Mammary epithelial cell (primary cell): ENCODE measurements at regions of chr7 and their contacts with region 1.

Region 1: GRCh38 chr7:131945313-131945911 is 389.0 kb upstream of the PODXL start:
- DNase-seq: peak; percentile 12
- H3K4me3 ChIP-seq: no peak overlapping the region
- H3K27ac ChIP-seq: no peak overlapping the region
- H3K4me1 ChIP-seq: peaks cover 5% of the 10 kb centered on the region
- H3K27me3 ChIP-seq: no peaks in the 10 kb centered on the region
- CTCF ChIP-seq: peak; percentile 50 to 86

Region 2: GRCh38 chr7:131683536-131684125 is 261.8 kb before region 1 on chr7:
- CTCF ChIA-PET with region 1: no interaction called
- dilution Hi-C with region 1: no loop called
- in situ Hi-C with region 1: no loop called
- intact Hi-C with region 1: no loop called
- DNase-seq: no peak
- H3K4me3 ChIP-seq: no peak overlapping the region
- H3K27ac ChIP-seq: no peak overlapping the region
- H3K4me1 ChIP-seq: no peaks in the 10 kb centered on the region
- H3K27me3 ChIP-seq: no peaks in the 10 kb centered on the region
- CTCF ChIP-seq: no peak

Region 3: GRCh38 chr7:132049462-132050304 is 104.3 kb after region 1 on chr7:
- CTCF ChIA-PET with region 1: no interaction called
- dilution Hi-C with region 1: no loop called
- in situ Hi-C with region 1: no loop called
- intact Hi-C with region 1: loop called (anchors 1 kb)
- DNase-seq: no peak
- H3K4me3 ChIP-seq: peak overlapping the region in 2 of 3 experiments; percentile 5 to 6
- H3K27ac ChIP-seq: no peak overlapping the region
- H3K4me1 ChIP-seq: no peaks in the 10 kb centered on the region
- H3K27me3 ChIP-seq: no peaks in the 10 kb centered on the region
- CTCF ChIP-seq: peak; percentile 75 to 76

Region 4: DNA sequence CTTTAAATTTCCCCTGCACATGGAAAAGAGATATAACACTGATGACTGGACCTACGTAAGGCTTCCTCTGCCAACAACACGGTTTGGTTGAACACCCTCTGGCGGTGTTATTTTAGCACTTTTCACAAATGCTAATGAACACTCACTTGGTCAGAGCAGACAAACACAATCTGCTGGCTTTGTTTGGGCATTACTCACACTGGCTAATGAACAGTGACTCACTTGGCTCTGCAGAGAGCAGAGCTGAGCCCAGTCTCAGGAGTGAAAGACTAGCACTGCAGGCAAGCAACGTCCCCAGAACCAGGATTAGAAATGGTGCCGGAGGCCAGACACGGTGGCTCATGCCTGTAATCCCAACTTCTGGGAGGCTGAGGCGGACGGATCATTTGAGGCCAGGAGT is 200.1 kb after region 1 on chr7:
- CTCF ChIA-PET with region 1: no interaction called
- dilution Hi-C with region 1: no loop called
- in situ Hi-C with region 1: no loop called
- intact Hi-C with region 1: loop called (anchors 2 kb)
- DNase-seq: peak; percentile 92
- H3K4me3 ChIP-seq: no peak overlapping the region
- H3K27ac ChIP-seq: no peak overlapping the region
- H3K4me1 ChIP-seq: peaks cover 12% of the 10 kb centered on the region
- H3K27me3 ChIP-seq: no peaks in the 10 kb centered on the region
- CTCF ChIP-seq: peak; percentile 27 to 53

Region 5: GRCh38 chr7:132154248-132154647 is 208.8 kb after region 1 on chr7:
- CTCF ChIA-PET with region 1: no interaction called
- dilution Hi-C with region 1: no loop called
- in situ Hi-C with region 1: no loop called
- intact Hi-C with region 1: loop called (anchors 2 kb)
- DNase-seq: no peak
- H3K4me3 ChIP-seq: no peak overlapping the region
- H3K27ac ChIP-seq: no peak overlapping the region
- H3K4me1 ChIP-seq: no peaks in the 10 kb centered on the region
- H3K27me3 ChIP-seq: no peaks in the 10 kb centered on the region
- CTCF ChIP-seq: peak; percentile 6 to 26

Region 6: GRCh38 chr7:132508827-132509301 is 563.5 kb after region 1 on chr7:
- CTCF ChIA-PET with region 1: no interaction called
- dilution Hi-C with region 1: no loop called
- in situ Hi-C with region 1: no loop called
- intact Hi-C with region 1: no loop called
- DNase-seq: no peak
- H3K4me3 ChIP-seq: no peak overlapping the region
- H3K27ac ChIP-seq: no peak overlapping the region
- H3K4me1 ChIP-seq: no peaks in the 10 kb centered on the region
- H3K27me3 ChIP-seq: no peaks in the 10 kb centered on the region
- CTCF ChIP-seq: no peak